CD8-positive, alpha-beta T cell (primary cell): ENCODE measurements at regions of chr5 and their contacts with region 1.

Region 1: DNA sequence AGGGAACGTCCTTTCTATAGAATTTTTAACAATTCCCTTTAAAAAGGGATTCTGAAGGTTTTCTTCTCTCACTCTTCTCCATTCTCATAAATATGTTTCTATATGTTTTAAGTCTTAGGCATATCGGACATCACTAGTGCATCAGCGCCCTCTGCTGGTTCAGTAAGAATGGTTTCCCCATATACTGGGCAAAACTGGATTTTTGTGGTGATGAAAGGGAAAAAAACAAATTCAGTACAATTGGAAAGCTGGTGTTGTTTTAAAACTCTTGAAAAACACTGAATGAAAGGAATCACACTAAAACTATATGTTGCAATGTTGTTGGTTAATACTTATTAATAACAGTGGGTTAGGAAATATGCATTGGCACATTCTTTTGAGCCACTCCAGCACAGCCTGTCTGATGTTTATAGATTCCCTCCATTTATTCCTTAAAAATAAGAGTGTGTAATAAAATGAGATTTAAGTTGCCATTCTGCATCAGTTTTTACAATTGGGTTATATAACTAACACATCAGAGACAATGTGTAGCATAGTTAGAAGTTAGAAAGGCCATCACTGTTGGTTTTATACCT is 15.8 kb downstream of the CWC27 start:
- DNase-seq: peak; percentile 33 to 86 (median 75)
- ATAC-seq: peak; percentile 80
- H3K4me3 ChIP-seq: no peak overlapping the region
- H3K4me3 Mint-ChIP-seq: no peak overlapping the region
- H3K27ac ChIP-seq: no peak overlapping the region
- H3K27ac Mint-ChIP-seq: no peak overlapping the region
- H3K4me1 ChIP-seq: no peaks in the 10 kb centered on the region
- H3K4me1 Mint-ChIP-seq: peaks cover 8% of the 10 kb centered on the region
- H3K27me3 ChIP-seq: no peaks in the 10 kb centered on the region
- H3K27me3 Mint-ChIP-seq: no peaks in the 10 kb centered on the region
- CTCF ChIP-seq: peak; percentile 91

Region 2: GRCh38 chr5:63401436-63402046 is 1383.0 kb before region 1 on chr5:
- CTCF ChIA-PET with region 1: no interaction called
- POLR2A ChIA-PET with region 1: no interaction called
- intact Hi-C with region 1: loop called in 1 of 2 experiments (anchors 10 kb)
- DNase-seq: peak in 1 of 9 experiments; percentile 2
- ATAC-seq: no peak
- H3K4me3 ChIP-seq: no peak overlapping the region
- H3K4me3 Mint-ChIP-seq: no peak overlapping the region
- H3K27ac ChIP-seq: no peak overlapping the region
- H3K27ac Mint-ChIP-seq: no peak overlapping the region
- H3K4me1 ChIP-seq: no peaks in the 10 kb centered on the region
- H3K4me1 Mint-ChIP-seq: no peaks in the 10 kb centered on the region
- H3K27me3 ChIP-seq: no peaks in the 10 kb centered on the region
- H3K27me3 Mint-ChIP-seq: no peaks in the 10 kb centered on the region
- CTCF ChIP-seq: no peak

Region 3: GRCh38 chr5:64074533-64074932 is 710.0 kb before region 1 on chr5:
- CTCF ChIA-PET with region 1: no interaction called
- POLR2A ChIA-PET with region 1: no interaction called
- intact Hi-C with region 1: loop called in 1 of 2 experiments (anchors 10 kb)
- DNase-seq: no peak
- ATAC-seq: no peak
- H3K4me3 ChIP-seq: no peak overlapping the region
- H3K4me3 Mint-ChIP-seq: no peak overlapping the region
- H3K27ac ChIP-seq: no peak overlapping the region
- H3K27ac Mint-ChIP-seq: no peak overlapping the region
- H3K4me1 ChIP-seq: no peaks in the 10 kb centered on the region
- H3K4me1 Mint-ChIP-seq: no peaks in the 10 kb centered on the region
- H3K27me3 ChIP-seq: no peaks in the 10 kb centered on the region
- H3K27me3 Mint-ChIP-seq: no peaks in the 10 kb centered on the region
- CTCF ChIP-seq: no peak

Region 4: GRCh38 chr5:64147849-64148441 is 636.6 kb before region 1 on chr5:
- CTCF ChIA-PET with region 1: no interaction called
- POLR2A ChIA-PET with region 1: no interaction called
- intact Hi-C with region 1: loop called in 1 of 2 experiments (anchors 10 kb)
- DNase-seq: no peak
- ATAC-seq: no peak
- H3K4me3 ChIP-seq: no peak overlapping the region
- H3K4me3 Mint-ChIP-seq: no peak overlapping the region
- H3K27ac ChIP-seq: no peak overlapping the region
- H3K27ac Mint-ChIP-seq: no peak overlapping the region
- H3K4me1 ChIP-seq: no peaks in the 10 kb centered on the region
- H3K4me1 Mint-ChIP-seq: no peaks in the 10 kb centered on the region
- H3K27me3 ChIP-seq: no peaks in the 10 kb centered on the region
- H3K27me3 Mint-ChIP-seq: no peaks in the 10 kb centered on the region
- CTCF ChIP-seq: no peak

Region 5: GRCh38 chr5:64229163-64229774 is 555.3 kb before region 1 on chr5:
- CTCF ChIA-PET with region 1: interaction called, 3 read pairs
- POLR2A ChIA-PET with region 1: no interaction called
- intact Hi-C with region 1: loop called in 1 of 2 experiments (anchors 2 kb)
- DNase-seq: peak in 1 of 9 experiments; percentile 9
- ATAC-seq: no peak
- H3K4me3 ChIP-seq: no peak overlapping the region
- H3K4me3 Mint-ChIP-seq: no peak overlapping the region
- H3K27ac ChIP-seq: no peak overlapping the region
- H3K27ac Mint-ChIP-seq: no peak overlapping the region
- H3K4me1 ChIP-seq: no peaks in the 10 kb centered on the region
- H3K4me1 Mint-ChIP-seq: no peaks in the 10 kb centered on the region
- H3K27me3 ChIP-seq: no peaks in the 10 kb centered on the region
- H3K27me3 Mint-ChIP-seq: no peaks in the 10 kb centered on the region
- CTCF ChIP-seq: peak; percentile 38

Region 6: DNA sequence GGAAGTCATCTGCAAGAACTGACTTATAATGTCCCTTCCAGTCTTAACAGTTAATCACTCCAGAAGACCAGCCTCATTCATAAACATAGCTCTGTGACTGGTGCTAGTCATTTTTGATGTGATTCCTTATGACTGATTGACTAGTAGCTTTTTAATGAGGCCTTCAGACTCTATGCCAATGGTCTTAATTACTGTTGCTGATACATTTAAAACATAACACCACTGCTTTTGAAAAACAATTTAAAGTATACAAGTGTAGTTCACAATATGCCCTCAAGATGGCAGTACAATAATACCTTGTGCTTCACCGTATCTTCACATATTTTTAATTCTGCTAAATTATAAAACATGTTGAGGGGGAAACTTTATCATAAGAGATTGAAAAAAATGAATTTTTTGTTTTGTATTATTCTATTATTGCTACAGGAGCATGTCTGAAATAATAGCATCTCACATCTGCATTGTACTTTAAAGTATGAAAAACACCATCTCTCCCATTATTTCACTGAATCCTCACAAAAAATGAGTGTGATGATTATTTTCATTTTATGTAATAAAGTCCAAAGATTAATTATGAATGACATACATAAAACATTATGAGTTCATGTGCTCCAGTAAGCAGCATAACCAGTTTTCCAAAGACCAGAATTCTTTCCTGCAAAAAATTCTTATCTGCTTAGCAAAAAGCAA is 149.4 kb before region 1 on chr5:
- CTCF ChIA-PET with region 1: interaction called, 39 read pairs
- POLR2A ChIA-PET with region 1: no interaction called
- intact Hi-C with region 1: loop called (anchors 1 kb)
- DNase-seq: peak in 2 of 9 experiments; percentile 42 to 57
- ATAC-seq: no peak
- H3K4me3 ChIP-seq: no peak overlapping the region
- H3K4me3 Mint-ChIP-seq: no peak overlapping the region
- H3K27ac ChIP-seq: no peak overlapping the region
- H3K27ac Mint-ChIP-seq: no peak overlapping the region
- H3K4me1 ChIP-seq: no peaks in the 10 kb centered on the region
- H3K4me1 Mint-ChIP-seq: no peaks in the 10 kb centered on the region
- H3K27me3 ChIP-seq: no peaks in the 10 kb centered on the region
- H3K27me3 Mint-ChIP-seq: peaks cover 29% of the 10 kb centered on the region
- CTCF ChIP-seq: peak; percentile 97

Region 7: DNA sequence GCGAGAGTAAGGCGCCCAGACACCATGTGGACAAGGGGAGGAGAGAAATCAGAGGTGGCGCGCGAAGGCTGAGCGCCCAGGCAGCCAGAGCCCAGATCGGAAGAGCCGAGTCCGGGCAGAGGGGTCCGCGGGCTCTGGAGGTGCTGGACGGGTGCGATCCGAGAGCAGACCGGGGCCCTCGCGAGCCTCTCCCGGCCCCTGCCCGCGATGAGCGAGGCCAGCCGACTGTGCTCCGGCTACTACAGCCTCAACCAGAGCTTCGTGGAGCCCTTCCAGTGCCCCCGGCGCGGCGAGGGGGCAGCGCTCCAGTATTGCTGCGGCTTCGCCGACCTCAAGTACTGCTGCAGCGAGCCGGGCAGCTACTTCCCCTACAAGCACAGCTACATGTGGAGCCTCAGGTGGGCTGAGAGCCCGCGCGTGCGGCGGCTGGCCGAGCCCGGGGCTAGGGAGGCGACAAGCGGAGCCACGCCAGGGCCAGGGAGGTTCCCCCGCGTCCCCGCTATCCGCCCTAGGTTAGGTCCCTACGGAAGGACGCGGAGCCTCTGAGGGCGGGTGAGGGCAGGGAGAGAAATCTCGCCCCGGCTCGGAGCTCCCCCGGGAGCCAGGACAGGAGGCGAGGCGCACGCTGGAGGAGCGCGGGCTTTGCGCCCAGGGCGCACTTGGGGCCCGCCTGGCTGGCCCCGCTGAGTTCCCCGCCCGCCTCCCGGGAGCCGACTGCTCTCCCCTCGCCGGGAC is 94.0 kb before region 1 on chr5 and contains the start of gene SHISAL2B:
- CTCF ChIA-PET with region 1: no interaction called
- POLR2A ChIA-PET with region 1: no interaction called
- intact Hi-C with region 1: no loop called
- DNase-seq: no peak
- ATAC-seq: no peak
- H3K4me3 ChIP-seq: no peak within 1 kb of the TSS
- H3K4me3 Mint-ChIP-seq: peak within 1 kb of the TSS; percentile 56
- H3K27ac ChIP-seq: no peak within 1 kb of the TSS
- H3K27ac Mint-ChIP-seq: no peak within 1 kb of the TSS
- H3K4me1 ChIP-seq: no peaks in the 10 kb centered on the region
- H3K4me1 Mint-ChIP-seq: peaks cover 8% of the 10 kb centered on the region
- H3K27me3 ChIP-seq: peaks cover 0 to 5% of the 10 kb centered on the region in 2 experiments
- H3K27me3 Mint-ChIP-seq: peaks cover 45% of the 10 kb centered on the region
- CTCF ChIP-seq: no peak
- total RNA-seq, gene SHISAL2B: not detected